ENCODE measurements at regions of chr20 and their contacts with region 1.

Region 1: DNA sequence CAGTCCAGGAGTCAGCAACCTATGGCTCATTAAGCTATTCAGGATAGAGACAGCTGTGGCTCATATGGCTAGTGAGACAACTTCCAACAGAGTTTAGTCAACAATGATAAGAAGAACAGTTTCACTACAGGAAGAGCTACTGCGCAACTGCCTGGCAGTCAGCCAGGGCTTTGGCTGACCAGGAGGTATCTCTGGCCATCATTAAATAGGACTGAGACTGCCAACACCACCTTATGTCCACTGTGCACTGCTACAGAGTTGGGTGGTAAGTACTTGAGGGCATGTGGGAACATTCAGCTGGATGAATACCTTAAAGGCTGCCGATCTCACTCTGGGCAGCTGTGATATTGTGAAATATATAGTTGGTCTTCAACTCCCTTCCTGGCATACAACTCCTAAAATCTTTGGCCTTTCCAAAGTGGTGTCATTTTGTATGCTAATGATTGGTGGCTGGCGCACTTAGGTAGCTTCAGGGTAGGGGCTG is 52.2 kb upstream of the FAM83C start:
- DNase-seq: peak in 4 of 5 donors; percentile 23 to 72 (median 63)
- ATAC-seq: peak in 3 of 4 donors; percentile 62 to 84 (median 74)
- H3K4me3 ChIP-seq: peak overlapping the region in 1 of 12 donors; percentile 16
- H3K27ac ChIP-seq: peak overlapping the region in 2 of 12 donors; percentile 20 to 43
- H3K4me1 ChIP-seq: peaks cover 0 to 14% (median 6%) of the 10 kb centered on the region in 12 donors
- H3K27me3 ChIP-seq: no peaks in the 10 kb centered on the region
- CTCF ChIP-seq: no peak
- POLR2A ChIP-seq: no peak

Region 2: DNA sequence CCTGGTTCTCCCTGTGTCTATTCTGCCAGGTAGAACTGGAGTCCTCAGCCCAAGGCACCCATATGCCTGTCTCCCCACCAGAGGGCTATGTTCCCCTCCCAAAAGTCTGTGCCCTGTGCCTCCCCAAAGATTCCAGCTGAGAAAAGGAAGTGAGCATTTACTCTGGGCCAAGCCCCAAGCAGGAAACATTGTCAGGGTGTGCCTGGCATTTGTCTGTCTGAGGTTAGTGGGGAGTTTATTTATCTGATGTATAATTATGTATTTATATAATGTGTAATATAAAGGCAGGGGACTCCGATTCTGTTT is 88.0 kb after region 1 on chr20:
- intact Hi-C with region 1: loop called in 1 of 10 experiments (anchors 5 kb)
- DNase-seq: no peak
- ATAC-seq: no peak
- H3K4me3 ChIP-seq: no peak overlapping the region
- H3K27ac ChIP-seq: no peak overlapping the region
- H3K4me1 ChIP-seq: no peaks in the 10 kb centered on the region
- H3K27me3 ChIP-seq: no peaks in the 10 kb centered on the region
- CTCF ChIP-seq: no peak
- POLR2A ChIP-seq: no peak

Measured in heart left ventricle (tissue), 16 donors.